Activated naive CD4-positive, alpha-beta T cell treated with anti-CD3 and anti-CD28 coated beads for 36 hours (primary cell): ENCODE measurements at regions of chr14 and their contacts with region 1.

Region 1: DNA sequence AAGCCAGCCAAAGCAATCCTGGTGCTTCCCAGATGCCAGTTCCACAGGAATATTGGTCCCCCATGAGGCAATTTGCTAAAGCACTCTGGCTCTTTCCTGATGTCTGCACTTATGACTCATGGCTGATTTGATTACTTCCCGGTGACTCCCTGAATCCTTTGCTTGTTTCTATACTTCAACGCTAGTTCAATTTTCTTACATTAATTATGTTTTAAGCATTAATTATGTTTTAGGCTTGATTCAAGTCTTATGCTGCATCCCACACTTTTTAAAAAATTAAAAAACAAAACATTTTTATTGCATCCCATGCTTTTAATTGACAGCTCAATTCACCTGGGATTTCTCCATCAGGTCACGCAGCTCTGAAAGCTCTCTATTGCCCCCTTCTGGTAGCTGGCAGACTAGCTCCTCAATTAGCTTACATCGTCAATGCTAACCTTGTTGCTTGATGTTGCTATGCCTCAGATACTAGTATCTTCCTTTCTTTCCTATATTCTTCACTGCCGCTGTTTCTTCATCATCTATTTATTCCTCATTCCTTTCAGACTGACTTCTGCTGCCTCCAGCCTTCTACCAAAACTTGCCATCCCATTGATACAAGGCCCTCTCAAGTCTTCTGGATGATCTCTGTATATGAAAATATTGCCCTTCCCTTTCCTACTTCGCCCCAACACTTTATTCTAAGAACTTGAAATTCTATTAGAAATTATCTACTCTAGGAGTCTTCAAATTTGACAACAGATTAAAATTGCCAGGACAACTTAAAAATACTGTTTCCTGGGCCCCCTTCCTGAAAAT is 32.0 kb downstream of the TSHR start:
- DNase-seq: peak; percentile 80
- H3K4me3 Mint-ChIP-seq: no peak overlapping the region
- H3K27ac Mint-ChIP-seq: no peak overlapping the region
- H3K4me1 Mint-ChIP-seq: no peaks in the 10 kb centered on the region
- H3K27me3 Mint-ChIP-seq: peaks cover 10% of the 10 kb centered on the region

Region 2: DNA sequence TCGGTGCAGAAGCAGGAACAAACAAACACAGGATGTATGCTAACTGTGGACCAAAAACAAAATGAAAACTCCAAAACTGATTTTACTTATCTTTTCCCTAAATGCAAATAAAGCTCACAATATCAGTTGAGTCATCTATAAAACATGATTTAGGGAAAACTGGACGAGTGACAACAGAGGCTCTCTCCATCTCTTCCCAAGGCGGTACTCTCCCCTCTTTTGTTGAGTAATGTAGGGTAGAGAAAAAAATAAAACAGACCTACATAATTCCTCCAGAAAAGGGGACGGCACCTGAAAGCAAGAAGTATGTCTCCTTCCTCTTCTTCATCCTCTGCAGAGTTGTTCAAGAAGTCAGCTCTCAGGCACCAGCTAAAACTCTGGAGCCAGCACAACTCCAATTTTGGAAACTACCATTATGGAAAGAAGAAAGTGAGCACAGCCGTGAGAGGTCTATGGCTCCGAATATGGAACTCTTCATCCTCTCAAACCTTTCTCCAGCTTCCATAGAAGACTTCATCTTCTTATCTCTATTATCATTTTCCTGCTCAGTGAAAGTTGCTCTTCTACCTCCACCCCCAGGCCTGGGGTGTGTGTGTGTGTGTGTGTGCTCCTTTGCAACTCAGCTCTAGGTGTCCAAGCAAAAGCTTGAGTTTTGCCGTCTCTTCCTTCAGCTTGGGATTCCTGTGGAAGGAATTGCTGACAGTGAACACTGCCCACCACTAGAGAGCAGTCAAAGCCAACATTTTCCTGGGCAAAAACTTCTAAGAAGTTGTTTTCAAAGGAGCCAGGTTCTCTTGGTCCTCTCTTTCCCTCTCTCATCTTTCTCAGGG is 931.6 kb before region 1 on chr14:
- CTCF ChIA-PET with region 1: interaction called, 4 read pairs
- intact Hi-C with region 1: loop called (anchors 5 kb)
- DNase-seq: peak; percentile 12
- H3K4me3 Mint-ChIP-seq: no peak overlapping the region
- H3K27ac Mint-ChIP-seq: no peak overlapping the region
- H3K4me1 Mint-ChIP-seq: no peaks in the 10 kb centered on the region
- H3K27me3 Mint-ChIP-seq: peaks cover 2% of the 10 kb centered on the region

Region 3: GRCh38 chr14:80587075-80587724 is 400.2 kb before region 1 on chr14:
- CTCF ChIA-PET with region 1: no interaction called
- intact Hi-C with region 1: loop called (anchors 1 kb)
- DNase-seq: peak; percentile 9
- H3K4me3 Mint-ChIP-seq: no peak overlapping the region
- H3K27ac Mint-ChIP-seq: peak overlapping the region; percentile 39
- H3K4me1 Mint-ChIP-seq: peaks cover 14% of the 10 kb centered on the region
- H3K27me3 Mint-ChIP-seq: no peaks in the 10 kb centered on the region

Region 4: GRCh38 chr14:80941241-80942182 is 45.9 kb before region 1 on chr14 and contains the start of gene CEP128:
- CTCF ChIA-PET with region 1: interaction called, 12 read pairs
- intact Hi-C with region 1: loop called (anchors 2 kb)
- DNase-seq: peak; percentile 90
- H3K4me3 Mint-ChIP-seq: peak within 1 kb of the TSS; percentile 86
- H3K27ac Mint-ChIP-seq: peak within 1 kb of the TSS; percentile 88
- H3K4me1 Mint-ChIP-seq: peaks cover 38% of the 10 kb centered on the region
- H3K27me3 Mint-ChIP-seq: no peaks in the 10 kb centered on the region
- total RNA-seq, gene CEP128: 16.4 to 17.1 TPM

Region 5: GRCh38 chr14:80973931-80974641 is 13.3 kb before region 1 on chr14:
- CTCF ChIA-PET with region 1: interaction called, 38 read pairs
- intact Hi-C with region 1: no loop called
- DNase-seq: no peak
- H3K4me3 Mint-ChIP-seq: no peak overlapping the region
- H3K27ac Mint-ChIP-seq: no peak overlapping the region
- H3K4me1 Mint-ChIP-seq: peaks cover 6% of the 10 kb centered on the region
- H3K27me3 Mint-ChIP-seq: peaks cover 7% of the 10 kb centered on the region